ENCODE measurements at regions of chr1 and their contacts with region 1.

Region 1: DNA sequence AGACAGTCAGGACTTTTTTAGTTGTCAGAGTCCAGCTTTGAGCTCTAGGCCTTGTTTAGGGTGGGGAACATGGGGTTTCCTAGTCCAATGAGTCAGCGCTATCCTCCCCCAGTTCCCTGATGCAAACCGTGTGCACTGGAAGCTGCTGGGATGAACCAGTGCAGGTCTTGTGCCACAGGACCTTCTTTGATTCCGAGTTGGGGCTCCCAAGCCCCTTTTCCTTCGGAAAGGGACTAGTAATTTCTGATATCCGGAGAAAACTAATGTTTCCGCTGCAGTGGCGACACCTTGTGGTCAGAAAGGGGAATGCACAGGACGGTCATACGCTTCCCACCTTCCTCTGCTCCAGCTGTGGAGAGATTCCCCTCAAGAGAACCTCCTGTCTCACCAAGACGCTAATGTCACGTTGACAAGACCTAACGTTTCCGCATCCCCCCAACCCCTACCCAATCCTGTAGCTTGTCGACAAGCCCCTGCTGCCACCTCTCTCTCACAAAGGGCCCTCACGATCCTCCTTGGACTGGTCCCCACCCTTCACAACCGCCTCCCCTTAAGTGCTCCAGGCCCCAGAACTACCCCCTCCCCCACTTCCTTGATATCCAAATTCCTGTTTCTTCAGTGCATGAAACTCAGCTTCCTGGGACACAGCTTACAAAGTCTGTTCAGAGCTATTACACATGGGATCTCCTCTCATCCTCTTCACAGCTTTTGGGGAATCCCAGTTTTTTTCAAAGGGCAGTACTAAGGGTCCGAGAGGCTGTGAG is 30.9 kb downstream of the GPA33 start:
- DNase-seq: peak; percentile 75 to 81
- H3K4me3 ChIP-seq: no peak overlapping the region
- H3K27ac ChIP-seq: no peak overlapping the region
- H3K4me1 ChIP-seq: peaks cover 0 to 4% of the 10 kb centered on the region in 2 donors
- H3K27me3 ChIP-seq: no peaks in the 10 kb centered on the region
- CTCF ChIP-seq: peak; percentile 80 to 98 (median 90)
- POLR2A ChIP-seq: no peak

Region 2: GRCh38 chr1:166905900-166906299 is 153.3 kb before region 1 on chr1:
- intact Hi-C with region 1: loop called (anchors 5 kb)
- DNase-seq: no peak
- H3K4me3 ChIP-seq: no peak overlapping the region
- H3K27ac ChIP-seq: no peak overlapping the region
- H3K4me1 ChIP-seq: no peaks in the 10 kb centered on the region
- H3K27me3 ChIP-seq: no peaks in the 10 kb centered on the region
- CTCF ChIP-seq: no peak
- POLR2A ChIP-seq: no peak

Region 3: GRCh38 chr1:166920561-166921475 is 138.4 kb before region 1 on chr1:
- intact Hi-C with region 1: no loop called
- DNase-seq: peak; percentile 32 to 44
- H3K4me3 ChIP-seq: peak overlapping the region in 1 of 3 donors; percentile 5
- H3K27ac ChIP-seq: no peak overlapping the region
- H3K4me1 ChIP-seq: peaks cover 3 to 15% of the 10 kb centered on the region in 2 donors
- H3K27me3 ChIP-seq: peaks cover 8% of the 10 kb centered on the region
- CTCF ChIP-seq: no peak
- POLR2A ChIP-seq: no peak

Region 4: GRCh38 chr1:167258858-167259257 is 199.6 kb after region 1 on chr1:
- intact Hi-C with region 1: no loop called
- DNase-seq: no peak
- H3K4me3 ChIP-seq: no peak overlapping the region
- H3K27ac ChIP-seq: no peak overlapping the region
- H3K4me1 ChIP-seq: peaks cover 12 to 30% of the 10 kb centered on the region in 2 donors
- H3K27me3 ChIP-seq: no peaks in the 10 kb centered on the region
- CTCF ChIP-seq: no peak
- POLR2A ChIP-seq: no peak

Measured in thyroid gland (tissue), 4 donors.